ENCODE measurements at regions of chr17 and their contacts with region 1.

Region 1: GRCh38 chr17:31787857-31788570 is 71.0 kb downstream of the COPRS start:
- DNase-seq: peak; percentile 93
- H3K4me3 ChIP-seq: no peak overlapping the region
- H3K27ac ChIP-seq: peak overlapping the region; percentile 79 to 84 (median 83)
- H3K4me1 ChIP-seq: peaks cover 0 to 13% (median 12%) of the 10 kb centered on the region in 4 donors
- H3K27me3 ChIP-seq: no peaks in the 10 kb centered on the region
- CTCF ChIP-seq: no peak
- EP300 ChIP-seq: peak in 1 of 4 donors; percentile 15
- POLR2A ChIP-seq: no peak

Region 2: GRCh38 chr17:31570951-31571892 is 216.8 kb before region 1 on chr17:
- intact Hi-C with region 1: loop called (anchors 5 kb)
- DNase-seq: peak; percentile 96
- H3K4me3 ChIP-seq: no peak overlapping the region
- H3K27ac ChIP-seq: peak overlapping the region; percentile 81 to 96 (median 86)
- H3K4me1 ChIP-seq: peaks cover 0 to 92% (median 83%) of the 10 kb centered on the region in 4 donors
- H3K27me3 ChIP-seq: no peaks in the 10 kb centered on the region
- CTCF ChIP-seq: no peak
- EP300 ChIP-seq: peak in 1 of 4 donors; percentile 14
- POLR2A ChIP-seq: no peak

Region 3: GRCh38 chr17:31696184-31696602 is 91.8 kb before region 1 on chr17:
- intact Hi-C with region 1: loop called (anchors 1 kb)
- DNase-seq: peak; percentile 96
- H3K4me3 ChIP-seq: no peak overlapping the region
- H3K27ac ChIP-seq: peak overlapping the region; percentile 81 to 86 (median 83)
- H3K4me1 ChIP-seq: peaks cover 0 to 84% (median 73%) of the 10 kb centered on the region in 4 donors
- H3K27me3 ChIP-seq: no peaks in the 10 kb centered on the region
- CTCF ChIP-seq: peak in 1 of 4 experiments; percentile 30
- EP300 ChIP-seq: peak in 3 of 4 donors; percentile 78 to 89 (median 80)
- POLR2A ChIP-seq: no peak

Measured in sigmoid colon (tissue), 7 donors.